ENCODE measurements at regions of chr16 and their contacts with region 1.

Region 1: GRCh38 chr16:82263521-82264143 is 93.6 kb upstream of the MPHOSPH6 start:
- DNase-seq: peak; percentile 51
- ATAC-seq: peak; percentile 96
- H3K4me3 ChIP-seq: no peak overlapping the region
- H3K27ac ChIP-seq: no peak overlapping the region
- H3K4me1 ChIP-seq: no peaks in the 10 kb centered on the region
- H3K27me3 ChIP-seq: peaks cover 17% of the 10 kb centered on the region
- CTCF ChIP-seq: peak; percentile 73
- POLR2A ChIP-seq: no peak
- RAD21 ChIP-seq: peak; percentile 82

Region 2: GRCh38 chr16:82456683-82457082 is 193.1 kb after region 1 on chr16:
- CTCF ChIA-PET with region 1: interaction called, 9 read pairs
- POLR2A ChIA-PET with region 1: no interaction called
- dilution Hi-C with region 1: no loop called
- in situ Hi-C with region 1: no loop called
- intact Hi-C with region 1: loop called (anchors 2 kb)
- DNase-seq: peak; percentile 36
- ATAC-seq: peak; percentile 93
- H3K4me3 ChIP-seq: no peak overlapping the region
- H3K27ac ChIP-seq: no peak overlapping the region
- H3K4me1 ChIP-seq: no peaks in the 10 kb centered on the region
- H3K27me3 ChIP-seq: peaks cover 1% of the 10 kb centered on the region
- CTCF ChIP-seq: peak; percentile 61
- POLR2A ChIP-seq: no peak
- RAD21 ChIP-seq: peak; percentile 40; the same call in 1 of the 2 replicates

Region 3: GRCh38 chr16:82626791-82627261 is 363.2 kb after region 1 on chr16 and contains the start of gene CDH13:
- CTCF ChIA-PET with region 1: no interaction called
- POLR2A ChIA-PET with region 1: no interaction called
- dilution Hi-C with region 1: no loop called
- in situ Hi-C with region 1: no loop called
- intact Hi-C with region 1: loop called (anchors 10 kb)
- DNase-seq: peak; percentile 77
- ATAC-seq: peak; percentile 40
- H3K4me3 ChIP-seq: peak within 1 kb of the TSS; percentile 60
- H3K27ac ChIP-seq: peak within 1 kb of the TSS; percentile 46
- H3K4me1 ChIP-seq: peaks cover 18% of the 10 kb centered on the region
- H3K27me3 ChIP-seq: peaks cover 21% of the 10 kb centered on the region
- CTCF ChIP-seq: no peak
- POLR2A ChIP-seq: peak; percentile 66; the same call in 1 of the 2 replicates
- RAD21 ChIP-seq: no peak
- total RNA-seq, gene CDH13: 45.8 and 74.7 TPM in 2 replicates

Region 4: DNA sequence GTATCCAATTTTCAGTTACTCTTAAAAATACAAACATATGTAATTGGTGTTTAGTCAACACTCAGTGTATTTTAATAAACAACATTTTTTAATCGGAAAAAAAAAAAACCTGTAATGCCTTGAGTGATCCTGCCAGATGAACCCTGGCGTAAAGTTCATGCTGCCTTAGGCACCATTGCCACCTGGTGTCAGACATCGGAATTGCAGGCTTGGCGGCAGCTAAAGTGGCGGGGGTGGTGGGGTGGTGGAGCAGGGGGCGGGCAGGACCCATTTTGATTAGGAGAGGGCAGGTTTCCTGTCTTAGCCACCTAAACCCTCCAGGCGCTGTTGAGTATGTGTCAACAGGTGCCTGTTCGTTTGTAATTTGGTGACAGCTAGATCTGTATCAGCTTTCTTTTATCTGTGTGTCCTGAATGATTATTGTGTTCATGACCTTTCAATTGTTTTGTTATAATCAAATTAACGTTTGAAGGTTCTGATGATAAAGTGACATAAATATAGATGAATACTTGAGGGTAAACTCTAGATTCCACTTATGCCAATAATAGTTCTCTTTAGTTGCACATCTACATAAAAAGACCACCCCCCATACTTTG is 951.9 kb after region 1 on chr16:
- CTCF ChIA-PET with region 1: no interaction called
- POLR2A ChIA-PET with region 1: no interaction called
- dilution Hi-C with region 1: no loop called
- in situ Hi-C with region 1: loop called (anchors 5 kb)
- intact Hi-C with region 1: loop called (anchors 1 kb)
- DNase-seq: peak; percentile 44
- ATAC-seq: peak; percentile 79
- H3K4me3 ChIP-seq: no peak overlapping the region
- H3K27ac ChIP-seq: no peak overlapping the region
- H3K4me1 ChIP-seq: no peaks in the 10 kb centered on the region
- H3K27me3 ChIP-seq: no peaks in the 10 kb centered on the region
- CTCF ChIP-seq: peak; percentile 80
- POLR2A ChIP-seq: no peak
- RAD21 ChIP-seq: peak; percentile 90

Region 5: DNA sequence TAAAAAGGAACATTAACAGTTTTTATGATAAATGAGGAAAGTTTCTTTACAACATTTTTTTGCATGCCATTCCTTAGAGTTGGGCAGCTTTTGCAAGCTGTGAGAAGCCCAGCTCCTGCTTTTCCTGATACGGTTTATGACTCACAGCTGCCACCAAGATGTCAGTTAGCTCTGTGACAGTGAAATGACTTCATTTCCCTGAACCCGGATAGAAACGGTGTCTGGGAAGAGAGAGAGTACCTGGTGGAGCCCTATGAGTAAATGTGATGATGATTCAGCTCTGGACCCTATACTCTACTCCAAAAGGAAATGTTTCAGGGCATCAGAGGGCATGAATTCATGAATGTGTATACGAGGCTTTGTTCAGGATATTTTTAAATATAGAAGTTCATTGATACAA is 1177.9 kb after region 1 on chr16:
- CTCF ChIA-PET with region 1: no interaction called
- POLR2A ChIA-PET with region 1: no interaction called
- dilution Hi-C with region 1: no loop called
- in situ Hi-C with region 1: loop called (anchors 25 kb)
- intact Hi-C with region 1: loop called (anchors 1 kb)
- DNase-seq: peak; percentile 10
- ATAC-seq: no peak
- H3K4me3 ChIP-seq: no peak overlapping the region
- H3K27ac ChIP-seq: no peak overlapping the region
- H3K4me1 ChIP-seq: no peaks in the 10 kb centered on the region
- H3K27me3 ChIP-seq: no peaks in the 10 kb centered on the region
- CTCF ChIP-seq: no peak
- POLR2A ChIP-seq: no peak
- RAD21 ChIP-seq: no peak

Region 6: GRCh38 chr16:83878838-83879237 is 1615.2 kb after region 1 on chr16:
- CTCF ChIA-PET with region 1: no interaction called
- POLR2A ChIA-PET with region 1: no interaction called
- dilution Hi-C with region 1: no loop called
- in situ Hi-C with region 1: loop called (anchors 25 kb)
- intact Hi-C with region 1: loop called (anchors 2 kb)
- DNase-seq: peak; percentile 60
- ATAC-seq: peak; percentile 67
- H3K4me3 ChIP-seq: no peak overlapping the region
- H3K27ac ChIP-seq: no peak overlapping the region
- H3K4me1 ChIP-seq: no peaks in the 10 kb centered on the region
- H3K27me3 ChIP-seq: peaks cover 35% of the 10 kb centered on the region
- CTCF ChIP-seq: peak; percentile 88
- POLR2A ChIP-seq: 0 out of 2 replicates have a peak, but pooled peaks have one; percentile 33
- RAD21 ChIP-seq: peak; percentile 90